GM12878 (cell line): ENCODE measurements at regions of chr2 and their contacts with region 1.

Region 1: DNA sequence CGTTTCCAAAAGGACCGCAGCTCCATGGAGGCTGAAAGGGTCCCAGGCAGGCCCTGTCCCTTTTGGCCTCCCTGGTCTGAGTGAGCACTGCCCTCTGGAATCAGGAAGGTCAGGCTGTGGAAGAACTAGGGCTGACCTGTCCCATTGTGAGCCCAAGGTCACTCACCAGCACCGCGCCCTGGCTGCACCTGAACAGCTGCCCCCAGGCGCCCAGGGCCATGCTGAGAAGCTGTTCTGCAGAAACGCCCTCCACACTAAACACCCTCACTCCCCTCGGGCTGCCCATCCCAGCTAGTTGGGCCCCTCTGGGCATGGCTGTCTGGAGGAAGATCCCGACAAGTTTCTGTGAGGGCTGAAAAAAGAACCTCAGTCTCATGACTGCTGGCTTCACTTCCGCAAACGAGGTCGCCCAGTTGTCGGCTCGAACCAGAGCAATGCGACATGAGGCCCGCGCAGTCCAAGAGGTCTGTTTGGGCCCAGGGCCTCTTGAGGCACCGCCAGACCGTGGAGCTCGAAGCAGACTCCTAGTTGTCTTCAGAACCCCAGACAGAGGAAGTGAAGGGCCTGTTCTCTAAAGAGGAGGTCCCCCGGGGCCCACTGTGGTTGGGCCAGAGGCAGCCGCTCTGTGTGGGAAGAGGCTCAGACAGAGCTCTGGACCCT is 64.4 kb downstream of the INPP5D start:
- DNase-seq: peak; percentile 46
- ATAC-seq: peak; percentile 94
- H3K4me3 ChIP-seq: peak overlapping the region; percentile 15; the same call in 1 of the 2 replicates
- H3K27ac ChIP-seq: peak overlapping the region; percentile 93
- H3K4me1 ChIP-seq: peaks cover 27% of the 10 kb centered on the region
- H3K27me3 ChIP-seq: no peaks in the 10 kb centered on the region
- CTCF ChIP-seq: no peak
- EP300 ChIP-seq: 0 out of 4 replicates have a peak, but pooled peaks of 1 of the 2 experiments have one; percentile 51
- POLR2A ChIP-seq: peak; percentile 60; the same call in 1 of the 2 replicates
- RAD21 ChIP-seq: no peak

Region 2: DNA sequence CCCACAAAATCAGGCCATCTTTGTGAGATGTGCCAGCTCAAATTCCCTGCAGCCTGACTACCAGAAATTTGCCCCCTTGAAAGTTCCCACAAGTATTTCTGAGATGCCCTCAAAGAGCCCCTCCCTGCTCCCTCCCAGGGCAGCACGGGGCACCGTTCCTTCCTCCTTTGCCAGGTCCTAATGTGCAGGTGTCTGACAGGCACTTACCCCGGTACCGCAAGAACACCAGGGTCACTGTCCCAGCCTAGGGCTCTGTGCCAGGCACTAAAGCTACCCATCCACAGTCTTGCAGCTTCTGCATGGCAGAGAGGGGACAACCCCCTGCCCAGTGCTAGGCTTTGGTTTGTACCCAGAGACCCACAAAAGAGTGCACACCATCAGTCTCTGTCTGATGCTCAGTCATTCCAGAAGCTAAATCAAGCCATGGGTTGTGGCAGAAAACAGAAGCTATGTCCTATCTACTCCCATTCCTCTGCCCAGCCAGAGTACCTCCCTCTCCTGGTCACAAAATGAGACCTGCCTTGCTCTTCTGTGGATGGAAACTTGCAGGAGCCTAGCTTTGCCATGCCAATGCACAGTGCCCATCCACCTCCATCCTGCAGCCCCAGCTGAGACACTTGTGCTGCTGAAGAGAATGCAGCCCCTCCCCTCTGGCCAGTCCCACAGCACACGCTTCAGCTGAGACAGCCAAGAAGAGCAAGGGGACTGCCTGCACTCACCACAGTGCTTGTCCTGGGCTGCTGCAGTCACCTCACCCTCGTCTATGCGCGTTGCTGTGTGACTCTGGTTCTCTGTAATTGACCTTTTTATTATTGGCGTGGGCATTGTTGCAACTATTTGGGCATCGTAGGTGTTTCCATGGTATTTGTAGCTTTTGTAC is 15.7 kb before region 1 on chr2:
- CTCF ChIA-PET with region 1: interaction called, 12 read pairs
- POLR2A ChIA-PET with region 1: interaction called, 4 read pairs
- RAD21 ChIA-PET with region 1: interaction called, 8 read pairs
- SMC1A ChIA-PET with region 1: interaction called, 11 read pairs
- in situ Hi-C with region 1: no loop called
- intact Hi-C with region 1: no loop called
- DNase-seq: no peak
- ATAC-seq: peak; percentile 81
- H3K4me3 ChIP-seq: 0 out of 2 replicates have a peak overlapping the region, but pooled peaks have one; percentile 30
- H3K27ac ChIP-seq: peak overlapping the region; percentile 43
- H3K4me1 ChIP-seq: peaks cover 34% of the 10 kb centered on the region
- H3K27me3 ChIP-seq: no peaks in the 10 kb centered on the region
- CTCF ChIP-seq: no peak; a peak in 1 of 6 replicates
- EP300 ChIP-seq: no peak
- POLR2A ChIP-seq: peak; percentile 26; the same call in 1 of the 2 replicates
- RAD21 ChIP-seq: no peak

Region 3: DNA sequence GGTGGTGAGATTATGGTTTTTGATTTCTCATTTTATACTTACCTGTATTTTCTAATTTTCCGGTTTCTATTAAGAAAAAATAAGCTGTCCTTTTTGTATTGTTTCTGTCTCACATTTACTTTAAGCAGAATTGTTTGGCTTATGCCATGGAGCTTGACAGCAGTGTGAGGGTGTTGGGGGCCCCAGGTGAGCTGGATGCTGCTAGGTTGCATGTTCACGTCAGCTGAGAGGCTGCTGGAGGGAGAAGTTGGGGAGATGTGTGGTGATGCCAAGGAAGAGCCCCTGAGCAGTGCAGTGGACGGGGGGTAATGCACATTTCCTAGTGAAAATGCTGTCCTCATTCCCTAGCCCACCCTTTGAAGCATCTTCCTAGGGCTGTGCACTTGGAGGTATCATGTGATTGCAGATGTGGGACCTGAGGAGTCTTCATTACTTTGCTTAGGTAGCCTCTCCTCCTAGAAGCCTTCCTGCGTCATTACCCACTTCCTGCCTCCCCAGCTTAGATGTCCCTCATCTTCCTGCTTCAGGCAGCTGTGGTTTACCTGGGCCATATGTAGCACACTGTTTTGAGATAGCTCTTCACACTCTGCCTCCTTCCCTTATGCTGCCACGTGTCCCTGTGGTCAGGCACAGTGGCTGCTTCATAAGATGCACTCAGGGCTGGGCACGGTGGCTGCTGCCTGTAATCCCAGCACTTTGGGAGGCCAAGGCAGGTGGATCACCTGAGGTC is 143.1 kb after region 1 on chr2:
- CTCF ChIA-PET with region 1: no interaction called
- POLR2A ChIA-PET with region 1: no interaction called
- RAD21 ChIA-PET with region 1: no interaction called
- SMC1A ChIA-PET with region 1: no interaction called
- in situ Hi-C with region 1: no loop called
- intact Hi-C with region 1: no loop called
- DNase-seq: peak; percentile 58
- ATAC-seq: peak; percentile 96
- H3K4me3 ChIP-seq: no peak overlapping the region
- H3K27ac ChIP-seq: peak overlapping the region; percentile 58
- H3K4me1 ChIP-seq: peaks cover 20% of the 10 kb centered on the region
- H3K27me3 ChIP-seq: no peaks in the 10 kb centered on the region
- CTCF ChIP-seq: no peak
- EP300 ChIP-seq: 0 out of 4 replicates have a peak, but pooled peaks of 1 of the 2 experiments have one; percentile 12
- POLR2A ChIP-seq: peak; percentile 54; the same call in 1 of the 2 replicates
- RAD21 ChIP-seq: no peak

Region 4: DNA sequence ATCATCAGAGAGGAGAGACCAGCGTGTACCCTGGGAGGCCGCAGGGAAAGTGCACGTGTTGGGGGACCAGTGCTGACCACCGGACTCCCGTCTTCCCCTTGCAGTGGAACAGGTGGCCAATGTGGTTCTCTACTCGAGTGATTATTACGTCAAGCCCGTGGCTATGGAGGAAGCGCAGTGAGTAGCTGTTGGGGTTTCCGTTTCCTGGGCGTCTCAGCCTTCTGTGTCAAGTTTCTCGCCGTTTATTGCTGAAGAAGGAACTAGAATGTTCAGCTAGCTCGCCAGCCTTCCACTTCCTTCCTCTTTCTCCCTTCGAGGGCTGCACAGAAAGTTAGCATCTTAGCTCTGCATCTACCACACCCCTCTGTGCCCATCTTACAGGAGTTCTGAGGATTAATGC is 207.0 kb after region 1 on chr2:
- CTCF ChIA-PET with region 1: no interaction called
- POLR2A ChIA-PET with region 1: no interaction called
- RAD21 ChIA-PET with region 1: no interaction called
- SMC1A ChIA-PET with region 1: no interaction called
- in situ Hi-C with region 1: no loop called
- intact Hi-C with region 1: no loop called
- DNase-seq: peak; percentile 80
- ATAC-seq: peak; percentile 94
- H3K4me3 ChIP-seq: no peak overlapping the region
- H3K27ac ChIP-seq: peak overlapping the region; percentile 70
- H3K4me1 ChIP-seq: peaks cover 18% of the 10 kb centered on the region
- H3K27me3 ChIP-seq: no peaks in the 10 kb centered on the region
- CTCF ChIP-seq: no peak
- EP300 ChIP-seq: 0 out of 4 replicates have a peak, but pooled peaks of 1 of the 2 experiments have one; percentile 17
- POLR2A ChIP-seq: peak; percentile 51; the same call in 1 of the 2 replicates
- RAD21 ChIP-seq: no peak